Ascending aorta (tissue), 2 donors: ENCODE measurements at regions of chr17 and their contacts with region 1.

Region 1: DNA sequence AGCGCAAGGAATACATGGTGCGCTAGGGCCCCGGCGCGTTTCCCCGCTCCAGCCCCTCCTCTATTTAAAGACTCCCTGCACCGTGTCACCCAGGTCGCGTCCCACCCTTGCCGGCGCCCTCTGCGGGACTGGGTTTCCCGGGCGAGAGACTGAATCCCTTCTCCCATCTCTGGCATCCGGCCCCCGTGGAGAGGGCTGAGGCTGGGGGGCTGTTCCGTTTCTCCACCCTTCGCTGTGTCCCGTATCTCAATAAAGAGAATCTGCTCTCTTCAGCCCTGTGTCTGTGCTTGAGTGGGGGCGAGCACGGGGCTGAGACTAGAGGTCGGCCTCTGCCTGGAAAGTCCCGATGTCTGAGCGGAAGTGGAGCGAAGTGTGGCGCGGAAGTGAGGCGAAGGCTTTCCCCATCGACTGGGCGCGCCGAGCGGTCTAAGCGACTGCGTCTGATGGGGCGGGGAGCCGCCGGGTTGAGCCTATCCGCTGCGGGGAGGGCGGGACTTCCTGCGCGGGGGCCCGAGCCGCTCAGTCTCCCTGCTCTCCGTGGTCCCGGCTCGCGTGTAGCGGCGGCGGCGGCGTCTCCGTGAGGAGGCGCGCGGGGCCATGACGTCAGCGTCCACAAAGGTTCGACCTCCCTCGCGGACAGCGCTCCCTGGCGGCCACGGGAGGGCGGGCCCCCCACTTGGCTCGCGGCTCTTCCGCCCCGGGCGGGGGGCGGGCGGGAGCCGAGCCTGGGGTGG is 2.0 kb downstream of the RNASEK start:
- DNase-seq: peak; percentile 94 to 99
- H3K4me3 ChIP-seq: peak overlapping the region; percentile 95 to 99
- H3K27ac ChIP-seq: peak overlapping the region; percentile 98 to 99
- H3K4me1 ChIP-seq: peaks cover 35 to 41% of the 10 kb centered on the region in 2 donors
- H3K27me3 ChIP-seq: no peaks in the 10 kb centered on the region
- CTCF ChIP-seq: peak; percentile 61 to 72 (median 69)

Region 2: DNA sequence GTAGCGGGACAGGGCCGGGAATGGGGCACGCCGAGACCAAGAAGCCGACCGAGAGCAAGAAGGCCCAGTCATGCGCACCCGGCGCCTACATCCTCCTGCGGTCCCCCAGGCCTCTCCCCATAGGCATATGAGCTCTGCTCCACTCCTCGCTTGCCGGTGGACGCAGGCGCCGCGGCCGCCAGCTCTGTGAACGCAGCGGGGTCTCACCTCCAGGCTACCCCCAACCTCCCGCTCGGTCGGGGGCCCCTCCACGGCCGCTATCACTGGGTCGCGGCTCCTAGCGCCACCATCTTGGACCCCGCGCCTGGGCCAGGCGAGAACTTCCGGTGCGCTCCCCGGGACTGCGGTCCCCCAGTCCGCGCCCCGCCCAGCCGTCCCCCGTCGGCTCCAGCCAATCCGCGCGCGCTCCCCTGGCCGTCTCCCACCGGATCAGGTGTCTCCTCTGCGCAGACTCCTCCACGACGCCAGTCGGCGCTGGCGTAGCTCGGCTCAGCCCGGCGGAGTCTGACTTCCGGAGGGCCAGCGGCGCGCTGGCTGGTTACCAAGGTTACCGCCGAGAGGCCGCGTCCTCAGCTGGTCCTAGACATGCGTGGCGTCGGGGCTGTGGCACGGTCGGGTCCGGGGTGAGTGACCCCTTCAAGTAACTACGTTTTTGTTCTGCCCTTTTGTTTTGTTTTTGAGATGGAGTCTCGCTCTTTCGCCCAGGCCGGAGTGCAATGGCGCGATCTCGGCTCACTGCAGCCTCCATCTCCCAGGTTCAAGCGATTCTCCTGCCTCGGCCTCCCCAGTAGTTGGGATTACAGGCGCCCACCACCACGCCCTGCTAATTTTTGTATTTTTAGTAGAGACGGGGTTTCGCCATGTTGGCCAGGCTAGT is 1822.6 kb before region 1 on chr17 and contains the start of gene ZNF594:
- intact Hi-C with region 1: loop called (anchors 10 kb)
- DNase-seq: peak; percentile 82 to 98
- H3K4me3 ChIP-seq: peak within 1 kb of the TSS; percentile 90 to 99
- H3K27ac ChIP-seq: peak within 1 kb of the TSS; percentile 86 to 87
- H3K4me1 ChIP-seq: peaks cover 6 to 12% of the 10 kb centered on the region in 2 donors
- H3K27me3 ChIP-seq: no peaks in the 10 kb centered on the region
- CTCF ChIP-seq: peak; percentile 72 to 81 (median 77)
- total RNA-seq, gene ZNF594: 0.21 TPM

Region 3: DNA sequence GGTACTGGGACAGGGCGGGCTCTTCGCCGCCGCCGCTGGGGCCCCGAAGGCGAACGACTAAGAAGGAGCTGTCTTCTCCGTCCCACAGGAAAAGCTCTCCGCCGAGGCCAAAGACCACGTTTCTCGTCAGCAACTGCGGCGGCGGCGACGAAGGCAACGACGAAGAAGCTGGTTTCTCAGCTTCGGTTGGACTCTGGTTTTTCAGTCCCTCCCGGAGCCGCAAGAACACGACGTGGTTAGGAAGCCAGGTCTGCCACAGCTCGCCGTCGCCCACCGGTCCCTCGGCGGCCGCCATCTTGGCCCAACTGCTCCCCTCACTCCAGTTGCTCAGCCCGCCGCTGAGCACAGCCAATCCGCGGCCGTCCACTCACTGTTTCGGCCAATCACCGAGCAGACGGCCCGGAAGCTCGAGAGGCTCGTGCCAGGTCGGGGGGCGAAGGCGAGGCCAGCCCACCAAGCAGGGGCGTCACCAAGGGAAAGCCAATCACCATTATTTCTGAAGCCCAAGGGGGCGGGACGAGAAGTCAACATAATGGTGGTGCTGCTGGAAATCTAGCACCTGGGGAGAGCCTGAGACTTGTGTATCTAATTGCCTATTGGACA is 1595.0 kb before region 1 on chr17 and contains the start of gene NUP88:
- intact Hi-C with region 1: loop called (anchors 10 kb)
- DNase-seq: peak; percentile 91 to 98
- H3K4me3 ChIP-seq: peak within 1 kb of the TSS; percentile 68 to 84
- H3K27ac ChIP-seq: peak within 1 kb of the TSS; percentile 78 to 82
- H3K4me1 ChIP-seq: peaks cover 4 to 20% of the 10 kb centered on the region in 2 donors
- H3K27me3 ChIP-seq: no peaks in the 10 kb centered on the region
- CTCF ChIP-seq: no peak
- total RNA-seq, gene NUP88: 102 TPM

Region 4: GRCh38 chr17:6443692-6444569 is 570.5 kb before region 1 on chr17 and contains the start of gene PIMREG:
- intact Hi-C with region 1: loop called (anchors 10 kb)
- DNase-seq: peak; percentile 75 to 95
- H3K4me3 ChIP-seq: peak within 1 kb of the TSS; percentile 55 to 73
- H3K27ac ChIP-seq: peak within 1 kb of the TSS in 1 of 2 donors; percentile 35
- H3K4me1 ChIP-seq: peaks cover 0 to 5% of the 10 kb centered on the region in 2 donors
- H3K27me3 ChIP-seq: no peaks in the 10 kb centered on the region
- CTCF ChIP-seq: no peak
- total RNA-seq, gene PIMREG: not detected

Region 5: GRCh38 chr17:6651357-6651918 is 363.0 kb before region 1 on chr17 and contains the starts of genes C17orf100 and MED31:
- intact Hi-C with region 1: loop called (anchors 5 kb)
- DNase-seq: peak; percentile 77 to 98
- H3K4me3 ChIP-seq: peak within 1 kb of the TSS; percentile 62 to 94
- H3K27ac ChIP-seq: peak within 1 kb of the TSS; percentile 73 to 78
- H3K4me1 ChIP-seq: peaks cover 0 to 21% of the 10 kb centered on the region in 2 donors
- H3K27me3 ChIP-seq: no peaks in the 10 kb centered on the region
- CTCF ChIP-seq: peak in 1 of 3 experiments; percentile 4
- total RNA-seq, gene C17orf100: 4.3 TPM
- total RNA-seq, gene MED31: not detected

Region 6: GRCh38 chr17:6753006-6753445 is 261.4 kb before region 1 on chr17:
- intact Hi-C with region 1: loop called (anchors 10 kb)
- DNase-seq: peak in 1 of 2 donors; percentile 78
- H3K4me3 ChIP-seq: peak overlapping the region in 1 of 2 donors; percentile 20
- H3K27ac ChIP-seq: peak overlapping the region; percentile 82 to 85
- H3K4me1 ChIP-seq: peaks cover 4 to 30% of the 10 kb centered on the region in 2 donors
- H3K27me3 ChIP-seq: no peaks in the 10 kb centered on the region
- CTCF ChIP-seq: no peak

Region 7: DNA sequence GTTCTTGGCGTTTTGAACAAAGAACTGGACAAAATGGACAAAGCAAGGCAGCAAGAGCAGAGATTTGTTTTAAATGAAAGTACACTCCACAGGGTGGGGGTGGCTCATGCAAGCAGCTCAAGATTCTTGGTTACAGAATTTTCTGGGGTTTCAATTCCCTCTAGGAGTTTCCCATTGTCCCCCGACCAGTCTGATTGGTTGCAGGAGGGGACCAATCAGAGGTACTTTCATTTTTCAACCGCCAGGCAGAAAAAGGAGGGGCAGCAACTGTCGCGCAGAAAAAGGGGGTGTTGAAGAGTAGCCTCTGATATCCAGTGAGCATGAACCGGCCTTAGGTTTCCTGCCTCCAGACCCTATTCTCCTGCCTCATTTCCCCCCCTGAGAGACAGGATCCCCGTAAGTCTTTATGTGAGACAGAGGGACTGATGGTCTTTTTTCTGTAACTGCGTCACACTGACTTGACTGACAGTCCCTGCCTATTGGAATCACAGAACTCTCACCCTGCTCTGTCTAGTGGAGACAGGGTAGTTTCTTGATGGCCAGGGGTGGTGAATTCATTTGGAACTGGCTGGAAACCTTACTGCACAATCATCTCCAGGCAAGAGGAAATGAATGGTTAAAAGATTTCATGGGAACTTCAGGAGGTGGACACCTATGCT is 77.9 kb before region 1 on chr17:
- intact Hi-C with region 1: no loop called
- DNase-seq: no peak
- H3K4me3 ChIP-seq: peak overlapping the region; percentile 20 to 59
- H3K27ac ChIP-seq: peak overlapping the region in 1 of 2 donors; percentile 45
- H3K4me1 ChIP-seq: no peaks in the 10 kb centered on the region
- H3K27me3 ChIP-seq: no peaks in the 10 kb centered on the region
- CTCF ChIP-seq: no peak

Region 8: DNA sequence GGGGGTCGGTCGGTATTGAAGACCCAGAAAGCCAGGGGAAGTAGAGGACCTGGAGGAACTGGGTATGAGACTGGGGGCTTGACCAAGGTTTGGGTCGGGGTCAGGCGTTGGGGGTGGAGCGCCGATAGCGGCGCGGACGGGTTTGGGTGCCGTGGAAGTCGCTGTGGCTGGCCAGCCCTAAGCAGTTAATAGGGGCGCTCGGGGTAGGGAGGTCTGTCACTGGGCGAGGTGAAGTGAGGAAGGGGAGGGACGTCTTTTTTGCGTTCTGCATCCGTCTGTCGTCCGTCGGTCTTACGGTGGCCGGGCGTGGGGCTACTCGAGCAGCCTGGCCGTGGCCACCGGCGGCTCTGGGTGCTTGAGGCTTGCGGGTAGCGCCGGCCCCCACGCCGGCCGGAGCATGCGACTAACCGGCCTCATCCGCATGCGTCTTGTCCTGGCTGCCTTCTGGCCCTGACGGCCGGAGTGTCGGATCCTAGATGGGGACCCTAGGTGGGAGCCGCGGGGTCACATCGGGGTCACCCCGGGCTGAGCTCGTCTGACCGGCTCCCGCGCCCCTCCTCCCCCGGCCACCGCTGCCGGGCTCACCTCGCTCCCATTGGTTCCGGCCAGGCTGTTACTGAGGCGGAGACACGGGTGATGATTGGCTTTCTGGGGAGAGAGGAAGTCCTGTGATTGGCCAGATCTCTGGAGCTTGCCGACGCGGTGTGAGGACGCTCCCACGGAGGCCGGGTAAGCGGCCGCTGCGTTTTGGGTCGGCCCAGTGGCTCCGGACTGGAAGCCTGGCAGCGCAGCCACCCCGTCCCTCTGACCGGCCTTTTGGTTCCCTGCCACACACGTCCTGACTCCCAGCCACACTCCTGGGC is 830.1 kb after region 1 on chr17:
- intact Hi-C with region 1: loop called (anchors 10 kb)
- DNase-seq: peak; percentile 81 to 97
- H3K4me3 ChIP-seq: peak overlapping the region; percentile 80 to 88
- H3K27ac ChIP-seq: peak overlapping the region; percentile 97 to 99
- H3K4me1 ChIP-seq: peaks cover 6 to 18% of the 10 kb centered on the region in 2 donors
- H3K27me3 ChIP-seq: no peaks in the 10 kb centered on the region
- CTCF ChIP-seq: no peak